Calu3 (cell line): ENCODE measurements at regions of chr3 and their contacts with region 1.

Region 1: DNA sequence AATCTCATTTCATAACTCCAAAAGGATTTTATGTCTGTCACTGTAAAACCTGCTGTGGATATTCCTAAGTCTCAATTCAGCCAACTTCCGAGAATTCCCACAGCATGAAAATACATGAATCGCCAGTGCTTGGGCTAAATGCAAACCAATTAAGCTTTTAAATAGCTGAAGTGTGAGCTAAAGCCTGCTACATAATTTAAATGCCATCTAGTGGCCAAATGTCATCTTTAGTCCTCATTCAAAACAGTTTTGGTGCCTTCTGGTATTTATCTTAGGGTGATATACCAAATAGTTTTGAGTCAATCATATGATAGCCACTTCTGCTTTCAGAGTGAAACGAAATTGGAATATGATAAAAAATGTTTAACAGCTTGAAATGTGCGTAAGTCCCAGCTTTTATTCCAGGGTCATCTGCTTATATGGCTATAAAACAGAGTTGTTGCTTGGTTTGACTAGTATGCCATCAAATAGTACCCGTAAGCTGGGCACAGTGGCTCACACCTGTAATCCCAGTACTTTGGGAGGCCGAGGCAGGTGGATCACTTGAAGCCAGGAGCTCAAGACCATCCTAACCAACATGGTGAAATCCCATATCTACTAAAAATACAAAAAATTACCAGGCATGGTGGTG is 41.8 kb upstream of the CCNL1 start:
- DNase-seq: no peak
- H3K4me3 Mint-ChIP-seq: no peak overlapping the region
- H3K27ac Mint-ChIP-seq: no peak overlapping the region
- H3K4me1 Mint-ChIP-seq: no peaks in the 10 kb centered on the region
- H3K27me3 Mint-ChIP-seq: no peaks in the 10 kb centered on the region
- CTCF ChIP-seq: peak; percentile 64

Region 2: DNA sequence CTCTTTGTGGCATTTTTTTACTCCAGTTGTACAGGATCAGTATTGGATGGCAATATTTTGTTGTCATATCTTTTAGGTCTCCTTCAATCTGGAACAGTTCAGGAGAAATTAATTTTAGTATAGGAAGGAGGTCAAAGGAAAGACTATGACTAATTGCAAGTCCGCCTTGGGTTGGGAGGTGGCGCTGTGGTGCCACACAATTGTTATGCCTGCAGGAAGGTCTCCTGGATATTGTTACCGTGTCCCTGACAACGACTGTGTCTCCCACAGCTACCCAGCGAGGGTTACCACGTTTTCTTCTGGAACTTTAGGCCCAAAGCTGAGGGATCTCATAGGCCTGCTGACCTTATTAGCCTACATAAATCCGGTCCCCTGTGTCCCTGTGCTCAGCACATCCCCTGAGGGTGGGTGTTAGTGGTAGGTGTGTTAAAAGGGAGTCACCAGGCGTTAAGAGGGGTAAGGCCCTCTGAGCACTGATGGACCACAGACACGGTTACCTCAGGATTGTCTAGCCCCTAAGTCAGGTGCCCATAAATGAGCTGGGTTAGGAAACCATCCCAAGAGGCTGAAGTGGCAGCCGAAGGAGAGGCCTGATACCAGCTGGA is 1049.8 kb before region 1 on chr3:
- CTCF ChIA-PET with region 1: interaction called, 11 read pairs
- intact Hi-C with region 1: loop called (anchors 1 kb)
- DNase-seq: peak; percentile 84
- H3K4me3 Mint-ChIP-seq: no peak overlapping the region
- H3K27ac Mint-ChIP-seq: no peak overlapping the region
- H3K4me1 Mint-ChIP-seq: peaks cover 8% of the 10 kb centered on the region
- H3K27me3 Mint-ChIP-seq: peaks cover 55% of the 10 kb centered on the region
- CTCF ChIP-seq: peak; percentile 95

Region 3: GRCh38 chr3:157166561-157166960 is 35.2 kb before region 1 on chr3:
- CTCF ChIA-PET with region 1: interaction called, 15 read pairs
- intact Hi-C with region 1: loop called (anchors 1 kb)
- DNase-seq: no peak
- H3K4me3 Mint-ChIP-seq: no peak overlapping the region
- H3K27ac Mint-ChIP-seq: peak overlapping the region; percentile 5
- H3K4me1 Mint-ChIP-seq: peaks cover 39% of the 10 kb centered on the region
- H3K27me3 Mint-ChIP-seq: no peaks in the 10 kb centered on the region
- CTCF ChIP-seq: no peak

Region 4: GRCh38 chr3:157239082-157239704 is 37.4 kb after region 1 on chr3:
- CTCF ChIA-PET with region 1: interaction called, 4 read pairs
- intact Hi-C with region 1: loop called (anchors 1 kb)
- DNase-seq: peak; percentile 93
- H3K4me3 Mint-ChIP-seq: no peak overlapping the region
- H3K27ac Mint-ChIP-seq: no peak overlapping the region
- H3K4me1 Mint-ChIP-seq: peaks cover 8% of the 10 kb centered on the region
- H3K27me3 Mint-ChIP-seq: no peaks in the 10 kb centered on the region
- CTCF ChIP-seq: peak; percentile 97

Region 5: DNA sequence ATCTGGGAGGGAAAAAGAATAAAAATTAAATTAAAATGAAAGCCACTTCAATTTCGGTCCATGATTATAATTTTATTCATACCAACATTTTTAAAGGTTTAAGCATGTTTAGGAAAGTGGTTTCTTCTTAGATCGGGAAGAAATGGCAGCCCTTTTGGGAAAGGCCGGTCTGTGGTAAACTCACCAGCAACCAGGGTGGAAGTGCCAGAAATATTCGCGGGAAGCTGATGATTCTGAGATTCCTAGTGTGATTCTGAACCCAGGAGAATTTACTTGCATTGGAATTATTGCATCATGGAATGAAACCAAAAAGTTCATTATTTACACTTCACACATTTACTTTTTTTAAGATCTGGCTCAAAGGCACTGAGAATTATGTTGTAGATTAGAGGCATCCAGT is 55.3 kb after region 1 on chr3:
- CTCF ChIA-PET with region 1: no interaction called
- intact Hi-C with region 1: no loop called
- DNase-seq: no peak
- H3K4me3 Mint-ChIP-seq: no peak overlapping the region
- H3K27ac Mint-ChIP-seq: no peak overlapping the region
- H3K4me1 Mint-ChIP-seq: peaks cover 5% of the 10 kb centered on the region
- H3K27me3 Mint-ChIP-seq: no peaks in the 10 kb centered on the region
- CTCF ChIP-seq: no peak

Region 6: DNA sequence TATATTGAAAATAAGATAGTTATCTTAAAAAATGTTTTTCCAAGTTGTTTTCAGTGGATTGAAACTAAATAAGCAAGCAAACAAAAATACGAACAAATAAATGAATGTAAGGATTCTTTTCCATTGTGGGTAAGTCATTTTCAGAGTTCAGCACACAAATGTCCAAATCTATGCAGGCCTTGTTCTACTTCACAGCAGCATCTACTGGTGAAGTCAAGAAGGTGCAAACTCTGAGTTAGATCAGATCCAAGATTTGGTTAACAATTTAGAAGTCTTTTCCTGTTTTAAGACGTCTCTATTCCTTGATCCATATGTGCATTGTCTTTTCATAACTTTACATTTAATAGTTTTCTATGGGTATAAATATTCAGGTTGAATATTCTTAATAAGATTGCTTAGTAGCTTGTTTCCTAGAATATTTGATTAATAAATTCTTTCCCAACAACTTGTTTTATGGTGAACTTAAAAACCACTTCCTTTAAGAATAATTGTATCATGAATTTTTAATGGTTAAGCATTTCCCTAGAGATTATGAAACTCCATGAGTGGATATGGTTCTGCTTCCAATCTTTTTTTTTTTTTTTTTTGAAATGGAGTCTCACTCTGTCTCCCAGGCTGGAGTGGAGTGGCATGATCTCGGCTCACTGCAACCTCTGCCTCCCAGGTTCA is 245.4 kb after region 1 on chr3:
- CTCF ChIA-PET with region 1: interaction called, 5 read pairs
- intact Hi-C with region 1: loop called (anchors 1 kb)
- DNase-seq: peak; percentile 17
- H3K4me3 Mint-ChIP-seq: no peak overlapping the region
- H3K27ac Mint-ChIP-seq: no peak overlapping the region
- H3K4me1 Mint-ChIP-seq: no peaks in the 10 kb centered on the region
- H3K27me3 Mint-ChIP-seq: no peaks in the 10 kb centered on the region
- CTCF ChIP-seq: peak; percentile 54

Region 7: DNA sequence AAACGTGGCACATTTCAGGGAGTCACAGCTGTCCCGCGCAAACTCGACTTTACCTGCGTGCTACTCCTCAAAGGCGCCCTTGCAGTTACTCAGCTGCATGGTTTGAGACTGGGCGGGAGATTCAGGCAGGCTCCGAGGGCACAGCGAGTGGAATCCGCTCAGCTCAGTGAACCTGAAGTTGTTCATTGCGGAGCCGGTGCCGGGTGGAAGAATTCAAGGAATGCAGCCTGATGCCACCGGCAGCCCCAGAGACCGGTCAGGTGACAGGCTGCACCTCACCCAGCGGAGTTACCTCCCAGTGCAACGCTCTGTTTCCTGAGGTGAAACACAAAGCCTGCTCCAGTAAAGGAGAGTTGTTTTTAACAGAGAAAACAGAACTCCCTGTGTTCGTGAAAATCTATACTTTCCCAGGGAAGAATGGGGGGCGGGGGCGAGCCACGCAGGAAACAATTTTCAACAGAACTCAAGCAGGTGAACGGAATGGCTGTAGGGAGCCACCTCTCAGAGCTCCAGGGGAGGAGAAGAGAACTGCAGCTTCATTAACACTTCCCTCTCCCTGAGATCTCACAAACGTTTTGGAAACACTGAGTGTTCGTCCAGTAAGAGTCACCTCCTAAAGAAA is 297.7 kb after region 1 on chr3:
- CTCF ChIA-PET with region 1: interaction called, 14 read pairs
- intact Hi-C with region 1: no loop called
- DNase-seq: peak; percentile 93
- H3K4me3 Mint-ChIP-seq: peak overlapping the region; percentile 81
- H3K27ac Mint-ChIP-seq: peak overlapping the region; percentile 95
- H3K4me1 Mint-ChIP-seq: peaks cover 80% of the 10 kb centered on the region
- H3K27me3 Mint-ChIP-seq: no peaks in the 10 kb centered on the region
- CTCF ChIP-seq: no peak